ENCODE measurements at regions of chr15 and their contacts with region 1.

Region 1: GRCh38 chr15:101201406-101202174 is 50.3 kb downstream of the CHSY1 start:
- DNase-seq: peak; percentile 56
- H3K4me3 Mint-ChIP-seq: no peak overlapping the region
- H3K27ac Mint-ChIP-seq: peak overlapping the region; percentile 57
- H3K4me1 Mint-ChIP-seq: peaks cover 83% of the 10 kb centered on the region
- H3K27me3 Mint-ChIP-seq: no peaks in the 10 kb centered on the region

Region 2: DNA sequence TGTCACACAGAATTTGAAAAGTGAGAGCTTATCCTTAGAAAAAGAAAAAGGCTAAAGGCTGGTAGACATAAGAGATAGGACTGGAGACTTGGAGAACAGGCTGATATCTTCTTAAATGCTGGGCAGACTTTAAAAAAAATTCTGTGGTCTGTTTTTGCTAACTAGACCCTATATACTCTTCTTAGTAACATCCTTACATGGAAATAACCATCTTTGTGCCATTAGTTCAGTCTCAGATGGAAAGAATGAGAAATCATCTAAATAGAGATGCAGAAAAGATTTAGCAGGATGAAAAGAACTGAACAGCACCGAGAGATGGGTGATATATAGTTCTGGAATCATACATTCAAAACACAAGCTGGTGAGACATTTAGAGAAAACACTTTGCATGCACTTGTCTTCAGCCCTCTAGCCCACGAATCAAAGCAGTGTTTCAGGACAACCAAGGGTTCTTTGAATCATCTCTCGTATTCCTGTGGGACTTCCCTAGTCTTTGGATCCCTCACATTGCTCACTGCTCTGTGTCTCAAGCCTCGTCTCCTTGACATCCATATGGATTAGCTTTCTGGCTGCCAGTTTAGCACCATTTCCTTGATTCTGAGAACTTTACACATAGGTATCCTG is 1375.3 kb before region 1 on chr15:
- CTCF ChIA-PET with region 1: no interaction called
- POLR2A ChIA-PET with region 1: no interaction called
- intact Hi-C with region 1: loop called (anchors 10 kb)
- DNase-seq: peak; percentile 43
- H3K4me3 Mint-ChIP-seq: peak overlapping the region; percentile 41
- H3K27ac Mint-ChIP-seq: peak overlapping the region; percentile 95
- H3K4me1 Mint-ChIP-seq: peaks cover 52% of the 10 kb centered on the region
- H3K27me3 Mint-ChIP-seq: no peaks in the 10 kb centered on the region

Region 3: DNA sequence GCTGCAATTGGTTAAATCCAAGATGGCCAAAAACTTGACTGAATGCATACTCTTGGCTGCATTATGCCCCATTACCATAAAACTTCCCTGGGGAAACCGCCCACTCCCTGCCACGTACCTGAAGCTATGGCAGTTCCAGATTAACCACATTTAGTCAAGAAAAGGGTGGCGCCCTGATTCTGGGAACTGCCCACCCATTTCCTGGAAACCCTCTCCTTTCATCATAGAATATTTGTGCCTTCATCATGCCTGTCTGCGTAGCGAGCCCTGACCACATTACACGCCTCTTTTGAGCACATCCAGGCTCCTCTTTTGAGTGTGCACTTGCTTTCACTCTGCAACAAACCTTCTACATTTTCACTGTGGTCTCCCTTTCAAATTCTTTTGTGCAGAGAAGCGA is 604.8 kb before region 1 on chr15:
- CTCF ChIA-PET with region 1: no interaction called
- POLR2A ChIA-PET with region 1: no interaction called
- intact Hi-C with region 1: loop called (anchors 5 kb)
- DNase-seq: peak; percentile 98
- H3K4me3 Mint-ChIP-seq: peak overlapping the region; percentile 76
- H3K27ac Mint-ChIP-seq: no peak overlapping the region
- H3K4me1 Mint-ChIP-seq: peaks cover 74% of the 10 kb centered on the region
- H3K27me3 Mint-ChIP-seq: no peaks in the 10 kb centered on the region

Region 4: DNA sequence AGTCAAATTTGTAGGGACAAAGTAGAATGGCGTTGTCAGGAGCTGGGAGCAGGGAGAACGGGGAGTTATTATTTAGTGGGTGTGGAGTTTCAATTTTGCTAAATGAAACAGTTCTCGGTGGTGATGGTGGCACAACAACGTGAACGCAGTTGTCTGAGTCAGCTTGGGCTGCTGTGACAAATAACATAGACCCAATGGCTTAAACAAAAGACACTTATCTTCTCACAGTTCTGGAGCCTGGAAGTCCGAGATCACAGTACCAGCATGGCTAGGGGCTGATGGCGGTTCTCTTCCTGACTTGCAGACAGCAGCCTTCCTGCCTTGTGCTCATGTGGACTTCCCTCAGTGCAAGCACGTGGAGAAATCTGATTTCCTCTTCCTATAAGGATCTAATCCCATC is 39.9 kb before region 1 on chr15:
- CTCF ChIA-PET with region 1: no interaction called
- POLR2A ChIA-PET with region 1: interaction called, 3 read pairs
- intact Hi-C with region 1: loop called (anchors 1 kb)
- DNase-seq: peak; percentile 73
- H3K4me3 Mint-ChIP-seq: peak overlapping the region; percentile 4
- H3K27ac Mint-ChIP-seq: peak overlapping the region; percentile 75
- H3K4me1 Mint-ChIP-seq: peaks cover 33% of the 10 kb centered on the region
- H3K27me3 Mint-ChIP-seq: no peaks in the 10 kb centered on the region

Region 5: DNA sequence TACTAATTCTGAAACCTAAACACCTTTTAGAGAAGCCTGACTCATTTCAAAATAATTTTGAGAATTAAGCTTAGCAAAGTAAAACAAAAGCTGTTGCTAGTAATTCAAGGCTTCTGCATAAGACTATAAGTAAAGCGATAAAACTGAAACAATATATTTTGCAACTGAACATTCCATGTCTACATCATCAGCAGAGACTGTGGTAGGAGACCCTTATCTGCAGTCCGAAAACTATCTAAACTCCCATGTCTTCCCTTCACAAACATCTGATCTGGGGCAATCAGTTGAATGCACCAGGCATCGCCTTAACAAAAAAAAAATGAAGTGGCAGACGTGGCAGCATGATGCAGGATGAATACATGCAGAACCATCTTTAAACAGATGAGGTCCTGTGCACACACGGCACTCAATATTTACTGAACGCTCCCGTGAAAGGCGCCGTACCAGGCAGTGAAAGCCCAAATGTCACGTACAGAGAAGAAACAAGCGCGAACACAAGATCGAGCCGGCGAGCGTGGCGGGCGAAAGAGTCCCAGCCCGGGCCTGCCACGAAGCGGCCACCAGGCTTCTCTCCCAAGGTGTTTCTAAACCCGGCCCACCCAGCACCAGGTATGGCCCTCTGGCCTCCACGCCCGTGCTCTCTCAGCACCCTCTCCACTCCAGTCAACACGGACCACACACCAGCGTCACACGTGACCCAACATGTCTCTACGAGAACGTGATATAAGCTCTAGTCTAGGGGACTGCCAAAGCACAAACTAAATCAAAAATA is 12.8 kb before region 1 on chr15:
- CTCF ChIA-PET with region 1: interaction called, 6 read pairs
- POLR2A ChIA-PET with region 1: interaction called, 24 read pairs
- intact Hi-C with region 1: loop called (anchors 1 kb)
- DNase-seq: no peak
- H3K4me3 Mint-ChIP-seq: peak overlapping the region; percentile 54
- H3K27ac Mint-ChIP-seq: peak overlapping the region; percentile 90
- H3K4me1 Mint-ChIP-seq: peaks cover 81% of the 10 kb centered on the region
- H3K27me3 Mint-ChIP-seq: no peaks in the 10 kb centered on the region

Region 6: DNA sequence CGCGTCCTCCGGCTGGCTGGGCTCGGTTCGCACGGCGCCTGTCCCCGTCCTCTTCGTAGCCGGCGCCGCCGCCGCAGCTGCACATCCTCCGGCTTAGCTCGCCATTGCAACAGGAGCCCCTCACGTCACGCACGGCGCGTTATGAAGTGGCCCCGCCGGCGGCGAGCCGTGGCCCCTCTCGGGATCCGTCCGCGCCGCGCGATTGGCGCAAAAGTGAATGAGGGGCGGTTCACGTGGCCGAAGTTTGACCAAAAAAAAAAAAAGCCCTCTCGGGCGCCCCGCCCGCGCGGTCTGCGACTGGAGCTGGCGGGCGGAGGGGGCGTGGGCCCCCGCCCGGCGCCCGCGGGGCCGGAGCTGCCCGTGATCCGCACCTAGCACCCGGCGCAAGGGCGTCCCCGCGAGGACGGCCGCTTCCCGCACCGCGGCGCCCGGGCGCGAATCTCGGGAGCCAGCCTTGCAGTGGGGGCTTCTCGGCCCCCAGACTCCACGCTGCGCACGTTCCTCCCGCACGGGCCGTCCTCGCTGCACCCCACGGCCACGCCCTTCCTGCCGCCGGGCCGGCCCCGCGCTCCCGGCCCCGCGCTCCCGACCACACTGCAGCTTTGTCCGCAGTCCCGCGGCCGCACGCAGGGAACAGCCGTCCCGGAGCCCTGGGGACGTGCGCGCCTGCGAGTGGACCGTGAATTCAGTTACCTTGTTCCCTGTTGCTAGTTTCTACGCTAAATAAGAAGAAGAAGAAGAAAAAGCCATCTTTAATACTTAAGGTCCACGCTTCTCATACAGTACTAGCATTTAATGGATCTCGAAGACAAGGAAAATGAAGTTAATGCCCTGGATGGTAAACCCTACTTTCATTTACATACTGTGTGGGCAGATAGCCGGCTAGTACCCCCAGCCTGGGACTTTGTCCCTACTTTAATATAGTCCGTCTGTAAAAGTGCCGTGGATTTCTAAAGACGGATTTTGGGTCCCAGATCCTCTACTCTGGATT is 50.5 kb after region 1 on chr15 and contains the start of gene CHSY1:
- CTCF ChIA-PET with region 1: interaction called, 4 read pairs
- POLR2A ChIA-PET with region 1: interaction called, 44 read pairs
- intact Hi-C with region 1: loop called (anchors 1 kb)
- DNase-seq: peak; percentile 91
- H3K4me3 Mint-ChIP-seq: peak within 1 kb of the TSS; percentile 91
- H3K27ac Mint-ChIP-seq: peak within 1 kb of the TSS; percentile 86
- H3K4me1 Mint-ChIP-seq: peaks cover 51% of the 10 kb centered on the region
- H3K27me3 Mint-ChIP-seq: no peaks in the 10 kb centered on the region
- total RNA-seq, gene CHSY1: 34.8 to 36.3 TPM

Region 7: DNA sequence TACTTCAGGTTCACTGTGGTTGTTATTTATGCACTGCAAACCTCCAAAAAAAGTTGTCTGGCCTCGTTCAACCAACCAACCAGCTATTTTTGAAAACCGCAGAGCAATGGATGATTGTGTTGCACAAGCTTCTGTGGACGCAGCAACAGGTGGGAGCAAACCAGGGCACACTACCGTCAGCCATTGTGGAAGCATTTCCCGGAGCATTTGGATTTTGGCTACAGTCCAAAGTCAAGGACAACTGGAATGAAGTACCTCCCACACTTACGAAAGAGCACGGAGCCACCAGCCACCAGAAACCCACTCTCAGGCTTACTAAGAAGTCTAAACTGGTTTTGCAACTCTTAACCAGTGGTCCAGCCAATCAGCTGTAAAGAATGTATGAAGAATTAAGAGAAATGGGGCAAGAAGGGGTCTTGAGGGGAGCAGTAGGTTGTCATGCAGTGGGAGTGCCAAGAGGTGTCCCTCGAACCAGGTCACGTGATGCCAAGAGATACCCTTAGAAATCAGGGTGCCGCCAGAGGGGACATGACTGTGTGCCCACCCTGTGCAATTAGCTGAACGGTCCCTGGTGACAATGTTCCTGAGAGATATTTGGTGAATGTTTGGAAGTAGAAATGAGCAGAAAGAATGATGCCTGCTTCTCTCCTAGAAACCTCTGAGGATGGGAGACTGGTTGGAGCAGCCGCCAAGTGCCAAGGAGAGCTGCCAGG is 356.8 kb after region 1 on chr15:
- CTCF ChIA-PET with region 1: no interaction called
- POLR2A ChIA-PET with region 1: no interaction called
- intact Hi-C with region 1: no loop called
- DNase-seq: no peak
- H3K4me3 Mint-ChIP-seq: no peak overlapping the region
- H3K27ac Mint-ChIP-seq: no peak overlapping the region
- H3K4me1 Mint-ChIP-seq: no peaks in the 10 kb centered on the region
- H3K27me3 Mint-ChIP-seq: peaks cover 6% of the 10 kb centered on the region

Measured in activated CD4-positive, alpha-beta memory T cell treated with anti-CD3 and anti-CD28 coated beads for 36 hours (primary cell).